Calu3 (cell line): ENCODE measurements at regions of chr2 and their contacts with region 1.

Region 1: DNA sequence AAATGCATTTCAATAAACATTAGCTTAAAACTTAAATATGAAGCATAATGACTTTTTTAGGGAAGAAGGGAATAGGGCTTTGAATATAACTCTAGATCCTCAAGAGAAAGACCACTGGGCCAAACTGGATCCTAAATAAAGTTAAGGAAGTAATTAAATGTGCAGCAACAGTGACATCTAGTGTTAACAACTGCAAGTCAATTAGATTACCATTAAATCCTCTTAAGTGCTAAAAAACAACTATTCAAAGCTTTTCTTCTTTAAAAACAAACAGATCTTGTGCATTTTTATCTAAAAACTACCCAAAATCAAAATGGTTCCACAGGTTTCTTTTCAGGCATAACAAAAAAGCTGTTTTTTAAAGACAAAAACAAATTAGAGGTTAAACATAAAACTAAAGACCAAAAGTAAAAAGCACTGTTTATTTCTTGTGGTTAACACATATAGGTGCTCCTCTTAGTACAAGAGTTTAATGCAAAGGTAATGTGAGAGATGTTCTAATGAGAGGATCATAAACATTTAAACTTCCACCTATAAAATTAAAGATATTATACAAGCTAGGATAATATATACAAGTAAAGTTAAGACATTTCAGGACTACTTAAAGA is 111.4 kb downstream of the THADA start:
- DNase-seq: no peak
- H3K4me3 Mint-ChIP-seq: no peak overlapping the region
- H3K27ac Mint-ChIP-seq: no peak overlapping the region
- H3K4me1 Mint-ChIP-seq: peaks cover 26% of the 10 kb centered on the region
- H3K27me3 Mint-ChIP-seq: no peaks in the 10 kb centered on the region
- CTCF ChIP-seq: no peak

Region 2: DNA sequence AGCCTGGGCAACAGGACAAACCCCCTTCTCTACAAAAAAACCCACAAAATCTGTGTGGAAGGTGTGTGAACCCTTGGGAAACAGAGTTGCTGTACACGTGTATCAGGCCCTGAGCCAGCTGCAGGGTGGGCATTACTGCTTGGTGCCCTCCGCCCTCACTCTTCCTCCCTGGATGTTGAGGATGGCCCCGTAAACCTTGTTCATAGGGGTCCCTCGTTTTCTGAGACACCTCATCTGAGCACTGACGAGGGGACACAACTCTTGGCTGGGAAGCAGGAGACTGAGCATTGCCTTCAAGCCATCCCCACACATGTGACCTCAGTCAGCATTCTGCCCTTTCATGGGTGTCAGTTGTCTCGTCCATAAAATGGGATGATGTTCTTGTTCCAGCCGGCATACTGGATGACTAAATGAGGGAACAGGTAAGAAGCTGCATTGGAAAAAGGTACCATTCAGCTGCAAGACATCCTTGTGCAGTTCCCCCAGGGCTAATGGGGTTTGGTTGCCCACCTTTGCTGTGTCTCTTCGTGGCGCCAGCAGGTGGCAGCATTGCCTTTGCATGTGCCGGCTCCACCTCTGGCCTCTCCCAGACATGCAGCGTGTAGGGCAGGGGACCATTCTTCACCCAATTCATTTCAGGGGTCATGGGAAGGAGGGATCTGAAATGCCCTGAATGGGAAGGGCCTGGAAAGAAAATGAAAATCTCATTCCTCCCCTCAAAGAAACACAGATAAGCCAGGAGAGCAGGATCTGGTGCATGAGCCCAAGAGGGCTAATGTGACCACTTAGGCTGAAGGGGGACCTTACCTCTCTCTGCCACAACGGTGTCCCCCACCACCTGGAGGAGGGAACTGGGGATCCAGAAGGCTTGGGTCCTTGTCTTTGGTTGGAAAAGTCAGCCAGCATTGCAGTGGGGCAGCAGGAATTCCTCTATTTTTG is 655.7 kb before region 1 on chr2:
- CTCF ChIA-PET with region 1: no interaction called
- intact Hi-C with region 1: loop called (anchors 1 kb)
- DNase-seq: peak; percentile 82
- H3K4me3 Mint-ChIP-seq: no peak overlapping the region
- H3K27ac Mint-ChIP-seq: no peak overlapping the region
- H3K4me1 Mint-ChIP-seq: peaks cover 27% of the 10 kb centered on the region
- H3K27me3 Mint-ChIP-seq: no peaks in the 10 kb centered on the region
- CTCF ChIP-seq: peak; percentile 90

Region 3: DNA sequence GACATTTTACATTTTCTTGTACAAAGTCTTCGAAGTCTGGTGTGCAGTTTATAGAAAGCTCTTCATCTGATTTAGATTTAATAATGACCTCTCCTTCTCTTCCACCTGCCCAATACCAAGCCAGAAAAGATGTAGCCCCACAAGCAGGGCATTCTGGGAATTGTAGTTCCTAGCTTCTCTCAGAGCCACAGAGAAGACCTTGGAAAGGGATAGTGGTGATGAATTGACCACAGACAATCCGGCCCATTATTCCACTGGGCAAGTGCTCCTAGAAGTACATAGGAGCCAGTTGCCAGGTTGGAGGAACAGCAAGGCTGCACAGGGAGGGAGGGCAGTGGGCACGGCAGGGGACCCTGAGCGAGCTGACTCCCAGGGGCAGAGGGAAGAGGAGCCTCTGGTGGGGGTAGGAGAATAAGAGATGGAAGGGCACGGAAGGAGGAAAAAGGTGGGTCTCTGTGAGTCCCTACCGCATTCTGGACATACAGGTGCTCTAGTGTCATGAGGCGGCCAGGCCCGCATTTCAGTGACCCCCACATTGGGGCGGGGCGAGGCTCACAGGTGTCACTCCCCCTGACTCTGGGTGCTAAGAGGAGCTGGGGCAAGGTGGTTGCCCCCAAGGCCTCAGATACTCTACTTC is 539.5 kb before region 1 on chr2:
- CTCF ChIA-PET with region 1: no interaction called
- intact Hi-C with region 1: loop called (anchors 5 kb)
- DNase-seq: no peak
- H3K4me3 Mint-ChIP-seq: no peak overlapping the region
- H3K27ac Mint-ChIP-seq: no peak overlapping the region
- H3K4me1 Mint-ChIP-seq: peaks cover 29% of the 10 kb centered on the region
- H3K27me3 Mint-ChIP-seq: no peaks in the 10 kb centered on the region
- CTCF ChIP-seq: no peak

Region 4: DNA sequence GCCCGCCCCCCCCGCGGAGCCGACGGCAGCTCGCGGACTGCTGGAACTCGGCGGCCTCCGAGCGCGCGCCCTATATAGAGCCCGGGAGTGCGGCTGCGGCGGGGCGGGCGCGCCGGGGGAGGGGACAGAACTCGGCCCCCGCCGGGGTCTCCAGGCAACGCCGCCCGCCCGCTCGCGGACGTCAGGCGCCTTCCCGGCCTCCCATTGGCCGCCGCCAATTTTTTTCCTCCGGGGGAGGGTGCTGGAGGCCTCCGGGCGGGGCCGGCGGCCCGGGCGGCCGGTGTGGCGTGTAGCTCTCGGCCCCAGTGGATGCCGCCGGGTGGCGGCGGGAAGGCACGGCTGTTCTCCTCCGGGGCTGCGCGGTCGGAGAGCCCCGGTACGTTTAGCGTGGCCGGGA is 257.9 kb before region 1 on chr2 and contains the start of gene ZFP36L2:
- CTCF ChIA-PET with region 1: interaction called, 8 read pairs
- intact Hi-C with region 1: loop called (anchors 1 kb)
- DNase-seq: peak; percentile 98
- H3K4me3 Mint-ChIP-seq: peak within 1 kb of the TSS; percentile 98
- H3K27ac Mint-ChIP-seq: peak within 1 kb of the TSS; percentile 94
- H3K4me1 Mint-ChIP-seq: peaks cover 26% of the 10 kb centered on the region
- H3K27me3 Mint-ChIP-seq: no peaks in the 10 kb centered on the region
- CTCF ChIP-seq: no peak
- total RNA-seq, gene ZFP36L2: 90.7 and 120 TPM in 2 replicates

Region 5: DNA sequence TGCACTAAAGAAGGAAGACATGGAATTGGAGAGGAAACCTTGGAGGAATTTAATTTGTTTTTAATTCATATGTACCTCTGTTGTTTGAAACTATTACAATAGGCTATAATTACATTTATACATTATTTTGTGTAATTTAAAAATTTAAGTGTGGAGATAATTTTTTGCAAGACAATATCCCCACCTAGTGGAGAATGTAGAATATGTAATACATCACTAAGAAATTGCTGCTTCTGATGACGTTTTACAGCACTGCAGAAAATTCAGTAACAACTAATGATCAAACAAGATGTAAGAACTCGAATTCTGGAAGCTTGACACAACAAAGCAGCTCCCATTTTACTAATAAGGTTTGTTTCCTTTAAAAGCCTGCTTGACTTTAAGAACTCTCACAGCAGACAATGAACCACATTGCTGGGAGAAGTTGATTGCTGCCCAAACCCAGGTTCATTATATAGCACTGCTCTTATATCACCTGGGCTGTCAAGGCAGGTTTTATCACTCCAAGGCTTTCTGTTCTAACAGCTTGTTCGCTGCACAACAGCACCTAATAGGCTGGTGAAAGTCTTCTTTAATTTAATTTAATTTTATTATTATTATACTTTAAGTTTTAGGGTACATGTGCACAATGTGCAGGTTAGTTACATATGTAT is 58.0 kb after region 1 on chr2:
- CTCF ChIA-PET with region 1: no interaction called
- intact Hi-C with region 1: loop called (anchors 5 kb)
- DNase-seq: no peak
- H3K4me3 Mint-ChIP-seq: no peak overlapping the region
- H3K27ac Mint-ChIP-seq: no peak overlapping the region
- H3K4me1 Mint-ChIP-seq: no peaks in the 10 kb centered on the region
- H3K27me3 Mint-ChIP-seq: no peaks in the 10 kb centered on the region
- CTCF ChIP-seq: no peak